Posterior vena cava (tissue), 2 donors: ENCODE measurements at regions of chr11 and their contacts with region 1.

Region 1: DNA sequence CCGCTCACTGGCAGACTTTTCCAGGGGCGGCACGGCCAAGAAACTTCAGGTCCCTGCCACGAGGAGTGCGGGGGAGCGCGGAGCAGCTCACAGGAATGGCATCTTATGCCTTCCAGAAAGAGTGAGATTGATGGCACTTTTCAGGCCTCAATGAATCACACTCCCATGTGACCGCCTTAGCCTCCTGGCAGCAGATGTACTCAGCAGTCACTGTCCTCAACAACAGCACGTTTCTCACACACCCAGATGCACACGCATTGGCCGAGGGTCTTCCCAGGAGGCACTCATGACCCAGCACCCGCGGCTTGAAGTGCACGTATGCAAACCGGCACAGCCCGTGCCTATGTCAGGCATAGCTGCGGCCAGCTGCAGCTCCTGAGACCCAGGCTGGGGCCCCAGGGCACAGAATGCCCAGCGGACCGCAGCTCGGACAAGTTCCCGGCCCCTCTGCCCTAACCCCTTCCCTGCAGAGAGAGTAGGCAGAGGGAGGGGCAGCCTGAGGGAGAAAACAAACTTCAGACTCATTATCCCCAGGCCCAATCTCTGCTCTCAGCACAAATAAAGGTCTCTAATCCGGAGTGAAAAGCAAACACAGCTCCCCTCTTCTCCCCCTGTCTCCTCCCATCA is 48.3 kb downstream of the RPUSD4 start:
- DNase-seq: no peak

Region 2: GRCh38 chr11:126062679-126063506 is 100.3 kb before region 1 on chr11 and contains the start of gene CDON:
- intact Hi-C with region 1: loop called in 1 of 2 experiments (anchors 10 kb)
- DNase-seq: peak; percentile 96
- total RNA-seq, gene CDON: 11.2 to 31.3 TPM

Region 3: GRCh38 chr11:126202646-126203359 is 39.6 kb after region 1 on chr11:
- intact Hi-C with region 1: no loop called
- DNase-seq: no peak